Calu3 (cell line): ENCODE measurements at regions of chr6 and their contacts with region 1.

Region 1: GRCh38 chr6:125232476-125232875 is 69.3 kb downstream of the HDDC2 start:
- DNase-seq: no peak
- H3K4me3 Mint-ChIP-seq: no peak overlapping the region
- H3K27ac Mint-ChIP-seq: no peak overlapping the region
- H3K4me1 Mint-ChIP-seq: peaks cover 11% of the 10 kb centered on the region
- H3K27me3 Mint-ChIP-seq: no peaks in the 10 kb centered on the region
- CTCF ChIP-seq: no peak

Region 2: DNA sequence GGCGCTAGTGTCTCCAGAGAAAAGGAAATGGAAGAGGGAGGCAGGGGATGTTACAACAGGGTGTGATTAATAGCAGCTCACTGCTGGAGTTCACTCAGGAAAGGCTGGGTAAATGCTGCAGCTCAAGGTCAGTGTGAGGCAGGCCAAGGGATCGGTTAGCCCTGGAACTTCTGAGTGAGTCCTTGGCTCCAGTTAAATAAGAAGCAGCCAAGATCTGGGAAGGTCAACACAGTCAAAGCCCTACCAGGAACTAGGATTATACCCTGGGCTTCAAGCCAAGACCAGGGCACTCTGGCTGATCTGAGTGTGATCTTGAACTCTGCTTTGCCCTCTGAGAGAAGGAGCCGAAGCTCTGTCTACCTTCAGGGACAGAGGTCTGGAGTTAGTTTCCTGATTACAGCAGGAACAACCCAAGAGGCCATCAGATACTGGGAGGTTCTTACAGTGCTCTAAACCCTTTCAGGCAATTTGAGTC is 34.6 kb before region 1 on chr6:
- CTCF ChIA-PET with region 1: no interaction called
- intact Hi-C with region 1: loop called (anchors 5 kb)
- DNase-seq: peak; percentile 19
- H3K4me3 Mint-ChIP-seq: no peak overlapping the region
- H3K27ac Mint-ChIP-seq: no peak overlapping the region
- H3K4me1 Mint-ChIP-seq: peaks cover 60% of the 10 kb centered on the region
- H3K27me3 Mint-ChIP-seq: no peaks in the 10 kb centered on the region
- CTCF ChIP-seq: no peak

Region 3: GRCh38 chr6:125469915-125470314 is 237.4 kb after region 1 on chr6:
- CTCF ChIA-PET with region 1: no interaction called
- intact Hi-C with region 1: no loop called
- DNase-seq: no peak
- H3K4me3 Mint-ChIP-seq: no peak overlapping the region
- H3K27ac Mint-ChIP-seq: no peak overlapping the region
- H3K4me1 Mint-ChIP-seq: no peaks in the 10 kb centered on the region
- H3K27me3 Mint-ChIP-seq: no peaks in the 10 kb centered on the region
- CTCF ChIP-seq: no peak